ENCODE measurements at regions of chr22 and their contacts with region 1.

Region 1: GRCh38 chr22:37701141-37701786 is 4.4 kb downstream of the TRIOBP start:
- DNase-seq: no peak

Region 2: DNA sequence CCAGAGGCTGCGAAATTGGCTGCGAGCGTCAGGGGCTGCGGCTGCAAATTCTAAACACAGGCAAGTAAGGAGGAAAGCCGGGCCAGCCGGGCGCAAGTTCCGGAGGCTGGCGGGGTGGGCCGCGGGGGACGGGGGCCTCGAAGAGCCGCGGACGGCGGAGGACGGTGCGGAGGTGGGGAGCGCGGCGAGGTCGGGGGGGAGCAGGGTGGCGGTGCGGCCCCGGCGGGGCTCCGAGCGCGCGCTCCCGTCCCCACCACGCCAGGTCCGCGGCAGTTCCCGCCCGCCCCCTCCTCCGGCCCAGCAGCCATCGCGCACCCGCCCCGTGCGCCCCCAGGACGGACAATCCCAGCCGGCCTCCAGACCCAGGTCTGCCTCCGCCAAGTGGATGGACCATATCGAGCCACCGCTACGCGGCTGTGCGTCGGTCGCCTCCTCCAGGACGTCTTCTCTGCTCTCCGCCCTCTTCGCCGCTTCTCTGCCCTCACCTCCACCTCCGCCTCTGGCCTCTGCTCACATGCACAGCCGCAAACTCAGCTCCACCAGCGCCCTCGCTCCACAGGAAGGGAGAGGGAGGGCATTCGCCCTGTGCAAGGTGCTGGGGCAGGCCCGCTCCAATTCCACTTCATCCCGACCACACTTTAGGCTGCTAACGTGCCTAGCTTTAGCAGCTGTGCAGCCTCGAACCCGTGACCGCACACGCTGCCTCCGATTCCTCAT is 281.1 kb before region 1 on chr22:
- intact Hi-C with region 1: no loop called
- DNase-seq: no peak

Region 3: GRCh38 chr22:37797874-37798500 is 96.7 kb after region 1 on chr22:
- intact Hi-C with region 1: loop called (anchors 5 kb)
- DNase-seq: no peak

Region 4: DNA sequence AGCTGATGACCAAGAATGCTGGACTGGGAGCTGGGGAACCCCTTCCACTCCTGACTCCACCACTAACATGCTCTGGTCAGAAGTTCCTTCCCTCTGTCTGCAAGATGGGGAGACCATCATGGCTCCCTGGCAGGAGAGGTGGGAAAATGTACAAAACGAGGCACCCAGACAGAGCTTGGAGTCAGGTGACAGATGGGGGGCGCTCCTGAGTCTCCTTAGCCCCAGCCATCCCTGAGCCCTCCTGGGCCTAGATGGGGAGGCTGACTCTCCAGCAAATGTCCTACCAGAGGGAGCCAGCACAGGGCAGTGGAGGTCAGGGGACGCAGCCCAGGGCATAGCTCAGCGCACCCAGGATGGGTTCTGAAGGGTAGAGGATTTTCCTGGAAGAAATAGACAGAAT is 733.7 kb after region 1 on chr22:
- intact Hi-C with region 1: no loop called
- DNase-seq: no peak